PC-3 (cell line): ENCODE measurements at regions of chr4 and their contacts with region 1.

Region 1: DNA sequence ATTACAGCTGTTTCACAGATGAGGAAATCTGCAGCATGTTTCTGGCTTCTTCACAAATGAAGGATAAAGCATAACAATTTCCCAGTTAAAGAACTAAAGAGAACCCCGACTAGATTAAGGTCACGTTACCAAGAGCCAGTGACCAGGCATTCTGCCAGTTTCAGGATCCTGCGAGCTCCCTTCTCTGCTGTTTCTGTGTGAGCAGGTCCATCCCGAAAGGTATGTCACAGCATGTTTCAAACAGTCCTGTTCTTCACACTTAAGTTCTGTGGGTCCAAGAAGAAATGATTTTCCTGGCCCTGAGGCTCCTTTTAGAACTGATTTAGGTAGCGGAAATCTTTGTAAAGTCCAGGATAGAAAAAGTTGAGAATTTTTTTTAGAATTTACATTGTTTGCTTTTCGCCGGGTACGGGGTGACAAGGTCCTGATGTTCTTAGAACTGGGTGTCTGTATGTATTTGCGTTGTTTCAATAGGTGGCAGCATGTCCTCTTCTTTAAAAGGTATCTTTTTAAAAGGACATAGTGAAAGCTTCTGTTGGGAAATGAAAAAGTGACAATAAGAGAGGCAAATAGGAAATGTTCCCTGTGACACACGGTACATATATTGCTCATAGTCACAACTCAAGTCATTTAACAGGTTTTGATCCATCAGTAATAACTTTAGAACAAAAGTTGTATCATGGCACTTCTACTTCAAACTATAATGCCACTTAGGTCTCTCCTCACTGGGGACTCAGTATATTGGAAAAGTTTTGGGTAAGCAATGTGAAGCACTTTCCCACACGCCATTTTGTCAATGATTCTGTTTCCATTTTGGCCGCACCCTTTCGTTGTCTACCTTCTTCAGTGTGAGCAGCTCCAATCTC is 18.4 kb downstream of the IL21 start:
- DNase-seq: peak; percentile 65
- ATAC-seq: peak; percentile 95
- H3K4me3 ChIP-seq: peak overlapping the region; percentile 51
- H3K27ac ChIP-seq: no peak overlapping the region
- H3K4me1 ChIP-seq: no peaks in the 10 kb centered on the region
- H3K27me3 ChIP-seq: no peaks in the 10 kb centered on the region
- CTCF ChIP-seq: peak; percentile 73

Region 2: GRCh38 chr4:122652379-122652778 is 49.9 kb after region 1 on chr4:
- CTCF ChIA-PET with region 1: no interaction called
- POLR2A ChIA-PET with region 1: no interaction called
- intact Hi-C with region 1: loop called (anchors 5 kb)
- DNase-seq: peak; percentile 66
- ATAC-seq: no peak
- H3K4me3 ChIP-seq: no peak overlapping the region
- H3K27ac ChIP-seq: no peak overlapping the region
- H3K4me1 ChIP-seq: no peaks in the 10 kb centered on the region
- H3K27me3 ChIP-seq: no peaks in the 10 kb centered on the region
- CTCF ChIP-seq: peak; percentile 51

Region 3: GRCh38 chr4:122716825-122717448 is 114.4 kb after region 1 on chr4:
- CTCF ChIA-PET with region 1: interaction called, 13 read pairs
- POLR2A ChIA-PET with region 1: no interaction called
- intact Hi-C with region 1: loop called (anchors 1 kb)
- DNase-seq: peak; percentile 76
- ATAC-seq: peak; percentile 79
- H3K4me3 ChIP-seq: no peak overlapping the region
- H3K27ac ChIP-seq: no peak overlapping the region
- H3K4me1 ChIP-seq: no peaks in the 10 kb centered on the region
- H3K27me3 ChIP-seq: no peaks in the 10 kb centered on the region
- CTCF ChIP-seq: peak; percentile 87

Region 4: DNA sequence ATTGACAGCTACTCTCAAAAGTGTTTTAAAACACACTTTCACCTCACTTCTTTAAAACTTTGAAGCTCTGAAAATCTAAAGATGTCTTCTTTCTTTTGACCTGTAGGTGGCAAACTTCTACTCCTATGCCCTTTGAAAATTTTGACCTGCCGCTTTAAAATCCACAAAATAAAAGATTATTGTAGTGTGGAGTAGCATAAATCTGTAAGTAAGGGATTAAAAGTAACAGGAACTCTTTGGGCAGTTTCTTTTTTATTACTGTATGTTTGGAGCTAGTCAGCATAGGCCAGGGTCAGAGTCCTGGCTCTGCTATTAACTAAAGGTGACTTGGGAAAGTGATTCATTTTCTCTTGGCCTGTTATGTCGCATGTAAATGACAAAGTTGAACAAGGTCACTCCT is 155.5 kb after region 1 on chr4:
- CTCF ChIA-PET with region 1: interaction called, 4 read pairs
- POLR2A ChIA-PET with region 1: no interaction called
- intact Hi-C with region 1: loop called (anchors 2 kb)
- DNase-seq: peak; percentile 61
- ATAC-seq: peak; percentile 90
- H3K4me3 ChIP-seq: no peak overlapping the region
- H3K27ac ChIP-seq: no peak overlapping the region
- H3K4me1 ChIP-seq: peaks cover 4% of the 10 kb centered on the region
- H3K27me3 ChIP-seq: no peaks in the 10 kb centered on the region
- CTCF ChIP-seq: peak; percentile 79

Region 5: GRCh38 chr4:122930862-122931261 is 328.4 kb after region 1 on chr4:
- CTCF ChIA-PET with region 1: no interaction called
- POLR2A ChIA-PET with region 1: no interaction called
- intact Hi-C with region 1: loop called (anchors 2 kb)
- DNase-seq: peak; percentile 56
- ATAC-seq: no peak
- H3K4me3 ChIP-seq: no peak overlapping the region
- H3K27ac ChIP-seq: no peak overlapping the region
- H3K4me1 ChIP-seq: peaks cover under 1% of the 10 kb centered on the region; the same call in 1 of the 2 replicates
- H3K27me3 ChIP-seq: no peaks in the 10 kb centered on the region
- CTCF ChIP-seq: peak; percentile 63